ENCODE measurements at regions of chr12 and their contacts with region 1.

Region 1: GRCh38 chr12:102479099-102479887 is 1.1 kb downstream of the IGF1 start:
- DNase-seq: no peak
- H3K4me3 ChIP-seq: no peak overlapping the region
- H3K4me3 Mint-ChIP-seq: no peak overlapping the region
- H3K27ac Mint-ChIP-seq: no peak overlapping the region
- H3K4me1 ChIP-seq: no peaks in the 10 kb centered on the region
- H3K4me1 Mint-ChIP-seq: peaks cover 4% of the 10 kb centered on the region
- H3K27me3 ChIP-seq: no peaks in the 10 kb centered on the region
- H3K27me3 Mint-ChIP-seq: no peaks in the 10 kb centered on the region
- CTCF ChIP-seq: no peak

Region 2: DNA sequence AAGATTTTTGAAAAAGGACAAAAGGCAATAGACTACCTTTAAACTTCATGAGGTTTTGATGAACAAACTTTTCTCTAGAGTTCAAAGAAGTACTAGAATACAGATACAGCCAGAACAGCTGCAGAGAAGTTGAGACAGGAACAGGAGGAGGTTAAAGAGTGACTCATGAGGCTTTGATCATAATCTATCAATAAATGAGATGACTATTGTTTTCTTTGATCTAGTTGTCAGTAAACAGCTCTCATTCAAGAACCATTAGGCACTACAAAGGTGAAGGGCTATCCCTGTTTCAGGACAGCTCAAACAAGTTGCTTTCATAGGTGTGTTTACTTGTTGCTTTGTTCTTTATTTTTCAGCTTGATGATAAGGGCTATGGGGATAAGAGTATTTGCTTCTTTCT is 419.9 kb before region 1 on chr12:
- CTCF ChIA-PET with region 1: no interaction called
- POLR2A ChIA-PET with region 1: no interaction called
- intact Hi-C with region 1: no loop called
- DNase-seq: peak; percentile 49 to 75
- H3K4me3 ChIP-seq: no peak overlapping the region
- H3K4me3 Mint-ChIP-seq: no peak overlapping the region
- H3K27ac Mint-ChIP-seq: peak overlapping the region; percentile 79
- H3K4me1 ChIP-seq: peaks cover 20% of the 10 kb centered on the region
- H3K4me1 Mint-ChIP-seq: peaks cover 16% of the 10 kb centered on the region
- H3K27me3 ChIP-seq: no peaks in the 10 kb centered on the region
- H3K27me3 Mint-ChIP-seq: no peaks in the 10 kb centered on the region
- CTCF ChIP-seq: no peak

Region 3: GRCh38 chr12:102197789-102198188 is 281.5 kb before region 1 on chr12 and contains the start of gene PMCH:
- CTCF ChIA-PET with region 1: no interaction called
- POLR2A ChIA-PET with region 1: no interaction called
- intact Hi-C with region 1: no loop called
- DNase-seq: no peak
- H3K4me3 ChIP-seq: no peak within 1 kb of the TSS
- H3K4me3 Mint-ChIP-seq: no peak within 1 kb of the TSS
- H3K27ac Mint-ChIP-seq: no peak within 1 kb of the TSS
- H3K4me1 ChIP-seq: no peaks in the 10 kb centered on the region
- H3K4me1 Mint-ChIP-seq: no peaks in the 10 kb centered on the region
- H3K27me3 ChIP-seq: no peaks in the 10 kb centered on the region
- H3K27me3 Mint-ChIP-seq: no peaks in the 10 kb centered on the region
- CTCF ChIP-seq: no peak
- total RNA-seq, gene PMCH: not detected in 2 replicates

Region 4: GRCh38 chr12:102343361-102344121 is 135.8 kb before region 1 on chr12:
- CTCF ChIA-PET with region 1: no interaction called
- POLR2A ChIA-PET with region 1: no interaction called
- intact Hi-C with region 1: loop called (anchors 5 kb)
- DNase-seq: peak in 1 of 2 experiments; percentile 4
- H3K4me3 ChIP-seq: no peak overlapping the region
- H3K4me3 Mint-ChIP-seq: no peak overlapping the region
- H3K27ac Mint-ChIP-seq: no peak overlapping the region
- H3K4me1 ChIP-seq: peaks cover 6% of the 10 kb centered on the region; the same call in 1 of the 2 replicates
- H3K4me1 Mint-ChIP-seq: no peaks in the 10 kb centered on the region
- H3K27me3 ChIP-seq: no peaks in the 10 kb centered on the region
- H3K27me3 Mint-ChIP-seq: no peaks in the 10 kb centered on the region
- CTCF ChIP-seq: no peak